IMR-90 (cell line): ENCODE measurements at regions of chr11 and their contacts with region 1.

Region 1: GRCh38 chr11:34997952-34998528 is 81.6 kb downstream of the PDHX start:
- DNase-seq: peak; percentile 58
- ATAC-seq: peak; percentile 63
- H3K4me3 ChIP-seq: no peak overlapping the region
- H3K27ac ChIP-seq: no peak overlapping the region
- H3K4me1 ChIP-seq: peaks cover 2% of the 10 kb centered on the region
- H3K27me3 ChIP-seq: no peaks in the 10 kb centered on the region
- CTCF ChIP-seq: peak; percentile 63
- POLR2A ChIP-seq: no peak
- RAD21 ChIP-seq: peak; percentile 74

Region 2: DNA sequence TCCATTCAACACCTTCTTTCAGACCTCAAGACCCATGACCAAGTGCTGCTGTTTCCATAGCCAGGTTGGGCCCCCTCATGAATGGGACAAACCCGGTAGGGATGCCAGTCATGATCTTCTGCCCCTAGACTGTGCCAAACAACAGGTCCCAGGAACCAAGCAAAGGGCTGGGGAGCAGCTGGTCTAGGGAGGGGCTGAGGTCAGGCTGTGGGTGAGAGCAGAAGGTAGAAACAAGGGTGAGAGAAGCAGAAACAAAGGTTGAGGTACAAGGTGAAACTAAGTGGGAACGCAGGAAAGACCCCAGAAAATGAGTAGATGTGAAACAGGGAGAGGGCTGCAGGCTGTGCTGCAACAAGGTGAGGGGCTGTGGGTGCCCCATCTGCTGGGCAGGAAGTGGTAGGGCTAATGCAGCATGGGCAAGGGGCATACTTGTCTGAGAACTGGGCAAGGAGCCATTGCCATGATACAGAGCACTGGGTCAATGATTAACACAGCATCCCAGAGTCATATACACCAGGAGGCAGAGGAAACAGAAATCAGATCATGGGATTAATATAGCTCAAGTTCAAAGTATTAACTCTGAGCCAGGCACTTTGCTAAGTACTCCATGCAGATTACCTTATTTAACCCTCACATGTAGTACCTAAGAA is 375.4 kb after region 1 on chr11:
- CTCF ChIA-PET with region 1: no interaction called
- POLR2A ChIA-PET with region 1: no interaction called
- dilution Hi-C with region 1: no loop called
- in situ Hi-C with region 1: loop called (anchors 10 kb)
- intact Hi-C with region 1: no loop called
- DNase-seq: peak; percentile 27
- ATAC-seq: no peak
- H3K4me3 ChIP-seq: no peak overlapping the region
- H3K27ac ChIP-seq: no peak overlapping the region
- H3K4me1 ChIP-seq: no peaks in the 10 kb centered on the region
- H3K27me3 ChIP-seq: no peaks in the 10 kb centered on the region
- CTCF ChIP-seq: no peak
- POLR2A ChIP-seq: no peak
- RAD21 ChIP-seq: no peak